ENCODE measurements at regions of chr3 and their contacts with region 1.

Region 1: DNA sequence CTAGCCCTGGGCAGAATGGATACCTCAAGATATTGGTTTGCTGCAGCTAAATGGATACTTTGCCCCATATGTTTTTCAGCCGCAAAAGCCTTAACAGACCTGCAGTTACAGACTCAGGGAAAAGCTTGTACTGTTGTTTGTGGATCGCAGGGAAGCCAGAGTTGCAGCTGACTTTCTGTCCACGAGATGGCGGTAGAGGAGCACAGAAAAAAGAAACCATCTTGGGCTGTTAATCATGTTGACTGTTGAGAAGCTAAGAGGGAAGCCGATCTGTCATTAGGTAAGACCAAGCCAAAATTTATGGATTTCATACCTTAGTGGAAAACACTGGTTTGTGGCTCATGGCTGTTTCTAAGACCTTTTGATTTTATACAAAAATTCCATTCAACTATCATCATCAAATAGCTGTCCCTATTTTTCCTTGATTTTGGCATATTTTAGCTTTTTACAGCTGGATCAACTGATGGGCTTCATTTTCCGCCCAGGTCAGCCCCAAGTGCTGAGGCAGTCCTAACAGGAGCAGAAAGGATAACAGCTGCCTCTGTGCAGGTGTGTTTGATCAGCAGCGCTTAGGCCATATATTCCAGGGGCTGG is 205.7 kb upstream of the ZPLD1 start:
- DNase-seq: peak; percentile 79
- ATAC-seq: peak; percentile 78
- H3K4me3 Mint-ChIP-seq: no peak overlapping the region
- H3K27ac Mint-ChIP-seq: no peak overlapping the region
- H3K4me1 Mint-ChIP-seq: peaks cover 5% of the 10 kb centered on the region
- H3K27me3 Mint-ChIP-seq: peaks cover 25% of the 10 kb centered on the region

Region 2: DNA sequence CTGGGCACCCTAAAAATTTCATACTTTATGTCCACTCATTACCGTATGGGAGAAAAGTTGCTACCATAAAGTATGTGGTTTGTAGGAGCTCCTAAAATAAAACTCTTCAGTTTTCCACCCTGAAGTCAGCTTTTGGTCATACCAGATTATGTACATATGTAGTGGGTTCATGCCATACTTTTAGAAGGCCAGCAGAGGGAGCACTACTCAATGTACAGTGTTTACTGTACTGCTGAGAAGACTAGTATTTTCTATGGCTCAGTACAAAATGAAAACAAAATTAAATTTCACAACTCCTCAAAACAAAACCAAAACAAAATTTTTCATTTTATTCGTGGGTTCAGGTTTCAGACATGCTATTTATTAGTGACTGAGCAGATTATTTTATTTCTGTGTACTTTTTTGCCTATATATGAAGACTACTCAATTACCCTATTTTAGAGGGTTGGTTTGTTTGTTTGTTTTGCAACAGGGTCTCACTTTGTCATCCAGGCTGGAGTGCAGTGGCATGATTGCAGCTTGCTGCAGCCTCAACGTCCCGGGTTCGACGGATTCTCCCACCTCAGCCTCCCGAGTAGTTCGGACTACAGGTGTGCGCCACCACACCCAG is 425.9 kb before region 1 on chr3:
- CTCF ChIA-PET with region 1: interaction called, 128 read pairs
- DNase-seq: peak; percentile 68
- ATAC-seq: peak; percentile 100
- H3K4me3 Mint-ChIP-seq: no peak overlapping the region
- H3K27ac Mint-ChIP-seq: peak overlapping the region; percentile 66
- H3K4me1 Mint-ChIP-seq: peaks cover 17% of the 10 kb centered on the region
- H3K27me3 Mint-ChIP-seq: no peaks in the 10 kb centered on the region

Region 3: DNA sequence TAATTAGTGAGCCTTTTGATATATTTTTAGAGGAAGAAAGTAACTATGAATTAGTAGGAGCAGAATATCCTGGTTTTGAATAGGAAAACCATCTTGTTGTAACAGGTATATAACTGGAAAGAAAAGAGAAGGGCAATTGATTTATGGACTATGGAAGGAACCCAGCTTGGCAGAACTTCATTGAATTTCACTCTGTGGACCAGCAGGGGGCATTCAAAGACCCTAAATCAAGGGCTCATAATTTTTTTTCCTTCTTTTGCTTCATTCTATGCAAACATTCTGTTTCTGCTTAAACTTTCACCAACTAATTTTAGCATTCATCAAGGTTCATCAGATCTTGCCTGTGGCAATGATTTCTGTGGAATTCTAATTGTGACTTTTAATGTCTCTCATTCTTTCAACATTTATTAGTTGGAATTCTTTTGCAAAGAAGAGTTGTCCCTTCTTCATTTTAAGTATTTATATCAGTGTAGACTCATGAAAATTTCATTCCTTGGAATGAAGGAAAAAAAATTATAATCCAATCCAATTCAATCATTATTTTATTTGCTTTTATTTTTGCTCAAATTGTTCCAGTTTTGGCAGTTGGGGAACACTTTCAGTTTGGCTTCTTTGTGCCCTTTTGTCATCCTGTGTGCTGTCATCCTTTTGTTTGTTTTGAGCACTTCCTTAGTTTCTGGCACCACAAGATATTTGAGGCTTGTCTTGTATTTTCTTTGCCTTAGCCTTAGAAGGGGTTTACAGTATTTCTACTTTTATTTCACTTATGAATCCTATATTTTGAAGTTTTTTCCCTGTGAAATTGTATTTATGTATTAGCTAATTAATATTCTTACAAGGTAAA is 419.8 kb before region 1 on chr3:
- CTCF ChIA-PET with region 1: interaction called, 128 read pairs
- DNase-seq: no peak
- ATAC-seq: peak; percentile 62
- H3K4me3 Mint-ChIP-seq: no peak overlapping the region
- H3K27ac Mint-ChIP-seq: peak overlapping the region; percentile 52
- H3K4me1 Mint-ChIP-seq: peaks cover 55% of the 10 kb centered on the region
- H3K27me3 Mint-ChIP-seq: no peaks in the 10 kb centered on the region

Region 4: GRCh38 chr3:101816215-101817149 is 412.7 kb before region 1 on chr3:
- CTCF ChIA-PET with region 1: interaction called, 128 read pairs
- DNase-seq: no peak
- ATAC-seq: no peak
- H3K4me3 Mint-ChIP-seq: no peak overlapping the region
- H3K27ac Mint-ChIP-seq: no peak overlapping the region
- H3K4me1 Mint-ChIP-seq: peaks cover 18% of the 10 kb centered on the region
- H3K27me3 Mint-ChIP-seq: no peaks in the 10 kb centered on the region

Region 5: GRCh38 chr3:101827211-101828174 is 401.7 kb before region 1 on chr3:
- CTCF ChIA-PET with region 1: interaction called, 17 read pairs
- DNase-seq: peak; percentile 91
- ATAC-seq: peak; percentile 89
- H3K4me3 Mint-ChIP-seq: peak overlapping the region; percentile 96
- H3K27ac Mint-ChIP-seq: peak overlapping the region; percentile 98
- H3K4me1 Mint-ChIP-seq: peaks cover 56% of the 10 kb centered on the region
- H3K27me3 Mint-ChIP-seq: no peaks in the 10 kb centered on the region

Region 6: DNA sequence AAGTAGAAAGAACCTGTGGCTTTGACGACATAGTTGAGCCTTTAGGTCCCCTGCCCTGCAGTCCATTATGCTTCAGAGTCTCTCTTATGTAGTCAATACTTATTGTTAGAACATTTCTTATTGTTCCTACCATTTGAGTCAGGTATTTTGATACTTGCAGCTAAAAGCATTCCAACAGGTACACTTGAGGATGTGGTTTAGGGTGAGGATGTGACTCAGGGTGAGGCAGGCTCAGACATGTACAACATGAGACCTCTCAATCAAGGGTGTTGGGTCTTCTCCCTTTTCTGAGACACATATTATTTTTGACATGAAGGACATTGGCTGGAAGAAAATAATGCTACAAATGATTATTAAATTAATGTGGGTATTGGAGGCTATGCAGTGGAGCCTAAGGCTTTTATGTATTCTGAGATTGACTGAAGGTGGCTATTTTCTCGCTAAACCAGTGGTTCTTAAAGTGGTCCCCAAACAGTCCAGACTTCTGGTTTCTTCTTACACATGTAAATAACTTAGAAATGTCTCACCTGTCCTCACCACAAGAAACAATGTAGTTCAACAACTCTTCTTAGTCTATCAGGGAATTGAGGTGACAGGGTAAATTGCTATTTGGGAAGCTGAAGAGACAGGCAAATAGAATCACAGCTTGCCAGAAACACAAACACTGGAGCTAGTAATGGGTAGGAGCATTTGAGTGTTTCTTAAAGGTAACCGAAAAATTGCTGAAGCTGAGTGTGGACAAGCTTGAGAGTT is 70.1 kb after region 1 on chr3:
- CTCF ChIA-PET with region 1: no interaction called
- DNase-seq: peak; percentile 46
- ATAC-seq: no peak
- H3K4me3 Mint-ChIP-seq: no peak overlapping the region
- H3K27ac Mint-ChIP-seq: no peak overlapping the region
- H3K4me1 Mint-ChIP-seq: peaks cover 16% of the 10 kb centered on the region
- H3K27me3 Mint-ChIP-seq: peaks cover 11% of the 10 kb centered on the region

Region 7: DNA sequence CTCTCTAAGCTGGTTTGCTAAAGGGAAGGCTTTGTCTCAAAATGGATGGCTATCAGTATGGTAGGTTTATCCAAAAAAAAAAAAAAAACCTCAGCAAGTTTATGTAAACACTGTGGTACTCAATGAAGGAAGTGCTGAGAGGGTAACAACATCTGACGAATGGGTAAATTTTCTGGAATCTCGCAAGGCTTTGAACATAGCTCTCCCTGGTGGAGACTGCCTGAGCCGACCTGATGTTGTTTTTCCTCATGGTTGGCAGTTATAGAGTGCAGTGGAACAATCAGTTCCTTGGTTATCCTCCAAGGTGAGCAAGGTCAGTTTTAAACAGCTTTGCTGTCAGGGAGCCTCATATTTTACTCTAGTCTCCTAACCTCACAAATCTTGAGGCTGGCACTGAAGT is 300.3 kb after region 1 on chr3:
- CTCF ChIA-PET with region 1: interaction called, 90 read pairs
- DNase-seq: no peak
- ATAC-seq: no peak
- H3K4me3 Mint-ChIP-seq: no peak overlapping the region
- H3K27ac Mint-ChIP-seq: no peak overlapping the region
- H3K4me1 Mint-ChIP-seq: peaks cover 3% of the 10 kb centered on the region
- H3K27me3 Mint-ChIP-seq: peaks cover 11% of the 10 kb centered on the region

Region 8: DNA sequence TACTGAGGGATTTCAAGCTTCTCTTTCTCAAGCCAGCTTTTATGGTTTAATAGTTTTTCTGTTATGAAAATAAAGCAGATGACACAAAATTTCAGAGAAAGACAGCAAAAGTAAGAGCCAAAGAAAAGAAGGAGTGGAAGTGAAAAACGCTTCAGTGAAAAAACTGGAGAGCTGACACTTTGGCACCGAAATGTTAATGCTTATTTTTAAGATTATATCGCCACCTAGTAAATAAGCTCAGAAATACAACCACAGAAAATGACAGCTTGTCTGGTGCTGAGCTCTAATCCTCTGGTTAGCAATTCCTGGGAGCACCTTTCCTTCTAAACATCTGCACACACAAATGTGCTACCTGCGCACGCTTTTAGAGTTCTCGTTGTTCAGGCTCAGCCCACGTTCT is 307.3 kb after region 1 on chr3:
- CTCF ChIA-PET with region 1: interaction called, 90 read pairs
- DNase-seq: no peak
- ATAC-seq: peak; percentile 42
- H3K4me3 Mint-ChIP-seq: no peak overlapping the region
- H3K27ac Mint-ChIP-seq: no peak overlapping the region
- H3K4me1 Mint-ChIP-seq: peaks cover 3% of the 10 kb centered on the region
- H3K27me3 Mint-ChIP-seq: peaks cover 7% of the 10 kb centered on the region